ENCODE measurements at regions of chr2 and their contacts with region 1.

Region 1: GRCh38 chr2:231674587-231675338 is 33.6 kb upstream of the PTMA start:
- DNase-seq: peak; percentile 76 to 82
- H3K4me3 ChIP-seq: no peak overlapping the region
- H3K4me3 Mint-ChIP-seq: no peak overlapping the region
- H3K27ac Mint-ChIP-seq: peak overlapping the region; percentile 45
- H3K4me1 ChIP-seq: peaks cover 49% of the 10 kb centered on the region
- H3K4me1 Mint-ChIP-seq: peaks cover 19% of the 10 kb centered on the region
- H3K27me3 ChIP-seq: no peaks in the 10 kb centered on the region
- H3K27me3 Mint-ChIP-seq: no peaks in the 10 kb centered on the region
- CTCF ChIP-seq: peak; percentile 63 to 81

Region 2: DNA sequence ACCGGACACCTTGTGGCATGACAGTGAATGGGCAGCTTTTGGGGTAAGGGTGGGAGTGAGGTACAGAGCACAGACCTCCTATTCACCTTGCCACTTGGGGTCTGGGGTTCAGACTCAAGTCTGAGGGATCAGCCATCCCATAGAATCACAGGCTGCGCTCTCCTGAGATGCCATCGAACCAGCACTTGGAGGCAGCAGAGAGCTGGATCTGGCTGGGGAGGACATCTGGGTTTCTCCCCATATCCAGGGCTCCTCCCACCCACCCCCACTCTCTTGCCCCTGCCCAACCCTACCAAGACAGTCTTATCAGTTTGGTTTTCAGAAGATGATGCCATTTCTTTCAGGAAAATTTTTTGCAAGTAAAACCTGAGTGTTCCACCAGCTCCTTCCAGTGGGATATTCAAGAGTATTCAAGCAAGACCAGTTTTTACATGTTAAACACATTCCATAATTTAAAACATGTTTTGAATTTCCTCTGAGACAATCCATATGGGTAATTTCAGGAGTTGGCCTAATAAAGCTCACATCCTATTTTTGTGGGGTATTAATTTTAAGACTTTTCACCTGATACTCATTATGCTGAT is 111.3 kb before region 1 on chr2:
- CTCF ChIA-PET with region 1: no interaction called
- POLR2A ChIA-PET with region 1: no interaction called
- intact Hi-C with region 1: loop called (anchors 2 kb)
- DNase-seq: peak; percentile 64 to 67
- H3K4me3 ChIP-seq: no peak overlapping the region
- H3K4me3 Mint-ChIP-seq: no peak overlapping the region
- H3K27ac Mint-ChIP-seq: no peak overlapping the region
- H3K4me1 ChIP-seq: no peaks in the 10 kb centered on the region
- H3K4me1 Mint-ChIP-seq: no peaks in the 10 kb centered on the region
- H3K27me3 ChIP-seq: no peaks in the 10 kb centered on the region
- H3K27me3 Mint-ChIP-seq: no peaks in the 10 kb centered on the region
- CTCF ChIP-seq: peak; percentile 72

Region 3: GRCh38 chr2:231642631-231643494 is 31.9 kb before region 1 on chr2:
- CTCF ChIA-PET with region 1: interaction called, 10 read pairs
- POLR2A ChIA-PET with region 1: no interaction called
- intact Hi-C with region 1: loop called (anchors 1 kb)
- DNase-seq: peak; percentile 77 to 89
- H3K4me3 ChIP-seq: no peak overlapping the region
- H3K4me3 Mint-ChIP-seq: peak overlapping the region; percentile 66
- H3K27ac Mint-ChIP-seq: peak overlapping the region; percentile 92
- H3K4me1 ChIP-seq: peaks cover 8% of the 10 kb centered on the region
- H3K4me1 Mint-ChIP-seq: peaks cover 6% of the 10 kb centered on the region
- H3K27me3 ChIP-seq: no peaks in the 10 kb centered on the region
- H3K27me3 Mint-ChIP-seq: no peaks in the 10 kb centered on the region
- CTCF ChIP-seq: no peak

Region 4: DNA sequence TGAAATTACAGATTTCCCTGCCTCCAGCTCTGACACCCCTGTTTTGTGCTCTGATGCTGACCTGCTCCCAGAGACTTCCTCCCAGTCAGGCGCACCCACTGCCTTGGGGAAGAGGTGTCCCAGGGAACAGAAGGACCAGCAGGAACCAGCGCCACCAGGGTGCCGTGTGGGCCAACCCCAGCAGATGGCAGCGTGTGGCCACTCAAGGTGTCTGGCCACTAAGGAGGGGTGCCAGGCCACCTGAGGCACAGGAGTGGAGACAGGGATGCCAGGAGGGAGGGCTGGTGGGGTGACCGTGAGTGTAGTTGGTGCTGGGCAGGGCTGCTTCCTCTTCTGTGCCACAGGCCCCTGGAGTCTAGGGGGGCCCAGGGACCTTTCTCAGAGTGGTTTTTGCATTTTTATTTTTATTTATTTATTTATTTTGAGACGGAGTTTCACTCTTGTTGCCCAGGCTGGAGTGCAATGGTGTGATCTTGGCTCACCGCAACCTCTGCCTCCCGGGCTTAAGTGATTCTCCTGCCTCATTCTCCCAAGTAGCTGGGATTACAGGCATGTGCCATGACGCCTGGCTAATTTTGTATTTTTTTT is 26.1 kb before region 1 on chr2:
- CTCF ChIA-PET with region 1: interaction called, 10 read pairs
- POLR2A ChIA-PET with region 1: interaction called, 3 read pairs
- intact Hi-C with region 1: loop called (anchors 1 kb)
- DNase-seq: peak; percentile 79 to 84
- H3K4me3 ChIP-seq: no peak overlapping the region
- H3K4me3 Mint-ChIP-seq: no peak overlapping the region
- H3K27ac Mint-ChIP-seq: no peak overlapping the region
- H3K4me1 ChIP-seq: peaks cover 7% of the 10 kb centered on the region
- H3K4me1 Mint-ChIP-seq: no peaks in the 10 kb centered on the region
- H3K27me3 ChIP-seq: no peaks in the 10 kb centered on the region
- H3K27me3 Mint-ChIP-seq: no peaks in the 10 kb centered on the region
- CTCF ChIP-seq: peak; percentile 57 to 81

Region 5: DNA sequence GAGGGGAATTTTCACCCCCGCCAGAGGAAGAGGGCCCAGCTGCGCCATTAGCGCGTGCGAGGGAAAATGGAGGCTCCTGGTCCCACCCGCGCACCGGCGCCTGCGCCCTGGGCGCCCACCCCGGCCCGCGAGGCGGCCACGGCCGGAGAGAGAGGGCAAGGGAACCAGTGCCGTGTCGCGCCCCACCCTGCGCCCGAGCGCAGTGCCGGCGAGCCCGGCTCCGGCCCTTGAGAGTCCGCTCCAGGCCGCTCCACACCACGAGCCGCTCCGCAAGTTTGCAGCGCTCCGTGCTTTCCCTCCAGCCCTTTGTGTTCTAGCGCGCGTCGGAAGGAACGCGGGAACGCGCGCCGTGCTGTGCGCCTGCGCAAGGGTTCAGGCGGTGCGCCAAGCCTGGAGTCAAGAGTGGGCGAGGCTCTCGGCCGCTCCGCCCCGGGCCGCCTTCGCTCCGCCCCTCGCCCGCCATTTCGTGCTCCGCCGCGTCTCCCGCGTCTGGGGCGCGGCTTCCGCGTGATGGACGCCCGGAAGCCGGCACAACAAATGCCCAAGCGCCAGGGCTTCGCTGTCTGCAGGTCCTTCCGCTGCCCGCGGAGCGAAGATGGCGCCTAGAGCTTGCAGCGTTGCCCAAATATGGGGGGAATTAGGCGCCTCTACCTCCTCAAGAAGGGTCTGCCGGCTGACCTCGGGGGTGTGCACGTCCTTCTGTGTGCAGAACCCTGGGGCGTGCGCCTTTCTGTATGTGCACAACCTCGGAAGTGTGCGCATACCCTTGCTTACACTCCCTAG is 12.5 kb before region 1 on chr2:
- CTCF ChIA-PET with region 1: interaction called, 18 read pairs
- POLR2A ChIA-PET with region 1: interaction called, 8 read pairs
- intact Hi-C with region 1: loop called (anchors 1 kb)
- DNase-seq: peak; percentile 93 to 96
- H3K4me3 ChIP-seq: peak overlapping the region; percentile 41
- H3K4me3 Mint-ChIP-seq: peak overlapping the region; percentile 77
- H3K27ac Mint-ChIP-seq: peak overlapping the region; percentile 93
- H3K4me1 ChIP-seq: peaks cover 53% of the 10 kb centered on the region
- H3K4me1 Mint-ChIP-seq: peaks cover 7% of the 10 kb centered on the region
- H3K27me3 ChIP-seq: no peaks in the 10 kb centered on the region
- H3K27me3 Mint-ChIP-seq: no peaks in the 10 kb centered on the region
- CTCF ChIP-seq: no peak

Region 6: GRCh38 chr2:231713730-231714430 is 39.1 kb after region 1 on chr2:
- CTCF ChIA-PET with region 1: interaction called, 55 read pairs
- POLR2A ChIA-PET with region 1: interaction called, 20 read pairs
- intact Hi-C with region 1: loop called (anchors 2 kb)
- DNase-seq: peak; percentile 81 to 82
- H3K4me3 ChIP-seq: no peak overlapping the region
- H3K4me3 Mint-ChIP-seq: peak overlapping the region; percentile 31
- H3K27ac Mint-ChIP-seq: peak overlapping the region; percentile 45
- H3K4me1 ChIP-seq: peaks cover 11% of the 10 kb centered on the region
- H3K4me1 Mint-ChIP-seq: peaks cover 16% of the 10 kb centered on the region
- H3K27me3 ChIP-seq: no peaks in the 10 kb centered on the region
- H3K27me3 Mint-ChIP-seq: no peaks in the 10 kb centered on the region
- CTCF ChIP-seq: peak; percentile 74 to 82